Activated CD8-positive, alpha-beta T cell treated with anti-CD3 and anti-CD28 coated beads for 36 hours (primary cell): ENCODE measurements at regions of chr1 and their contacts with region 1.

Region 1: DNA sequence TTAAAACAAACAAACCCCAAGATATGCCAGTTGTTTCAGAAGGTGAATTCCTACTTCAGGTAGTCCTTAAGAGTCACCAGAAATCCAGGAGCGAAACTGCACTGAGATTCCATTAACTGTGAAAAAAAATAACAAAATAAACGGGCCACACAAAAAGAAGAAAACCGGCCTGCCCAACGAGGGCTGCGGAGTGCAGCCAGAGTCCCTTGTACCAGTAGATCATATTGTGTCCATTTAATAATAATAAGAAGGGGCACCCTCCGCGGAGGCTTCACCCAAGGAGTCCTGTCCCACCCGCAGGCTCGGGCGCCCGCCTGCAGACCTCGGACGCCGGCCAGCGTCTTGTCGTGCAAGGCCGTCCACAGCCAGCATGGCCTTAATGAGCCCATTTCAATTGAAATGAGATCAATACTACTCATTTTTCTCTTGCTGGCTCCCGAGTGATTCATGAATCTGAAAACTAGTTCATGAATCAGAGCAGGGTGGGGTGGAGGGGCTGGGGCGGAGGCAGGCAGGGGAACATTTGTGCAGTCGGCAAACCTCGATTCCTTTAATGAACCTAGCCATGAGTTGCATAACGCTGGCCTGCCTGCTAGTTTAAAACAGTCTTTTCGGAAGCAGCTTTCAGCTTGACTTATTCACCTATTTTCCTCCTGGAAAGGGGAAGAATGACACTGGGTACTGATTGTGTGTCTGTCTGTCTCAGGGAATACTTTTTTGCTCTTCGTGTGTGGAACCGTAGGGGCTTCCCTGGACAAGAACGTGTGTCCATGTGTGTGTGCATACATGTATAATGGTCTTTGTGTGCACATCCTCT is 113.1 kb upstream of the IRF2BP2 start:
- DNase-seq: peak; percentile 89
- ATAC-seq: peak; percentile 63
- H3K4me3 Mint-ChIP-seq: peak overlapping the region; percentile 74
- H3K27ac Mint-ChIP-seq: peak overlapping the region; percentile 99
- H3K4me1 Mint-ChIP-seq: peaks cover 70% of the 10 kb centered on the region
- H3K27me3 Mint-ChIP-seq: no peaks in the 10 kb centered on the region
- CTCF ChIP-seq: no peak

Region 2: DNA sequence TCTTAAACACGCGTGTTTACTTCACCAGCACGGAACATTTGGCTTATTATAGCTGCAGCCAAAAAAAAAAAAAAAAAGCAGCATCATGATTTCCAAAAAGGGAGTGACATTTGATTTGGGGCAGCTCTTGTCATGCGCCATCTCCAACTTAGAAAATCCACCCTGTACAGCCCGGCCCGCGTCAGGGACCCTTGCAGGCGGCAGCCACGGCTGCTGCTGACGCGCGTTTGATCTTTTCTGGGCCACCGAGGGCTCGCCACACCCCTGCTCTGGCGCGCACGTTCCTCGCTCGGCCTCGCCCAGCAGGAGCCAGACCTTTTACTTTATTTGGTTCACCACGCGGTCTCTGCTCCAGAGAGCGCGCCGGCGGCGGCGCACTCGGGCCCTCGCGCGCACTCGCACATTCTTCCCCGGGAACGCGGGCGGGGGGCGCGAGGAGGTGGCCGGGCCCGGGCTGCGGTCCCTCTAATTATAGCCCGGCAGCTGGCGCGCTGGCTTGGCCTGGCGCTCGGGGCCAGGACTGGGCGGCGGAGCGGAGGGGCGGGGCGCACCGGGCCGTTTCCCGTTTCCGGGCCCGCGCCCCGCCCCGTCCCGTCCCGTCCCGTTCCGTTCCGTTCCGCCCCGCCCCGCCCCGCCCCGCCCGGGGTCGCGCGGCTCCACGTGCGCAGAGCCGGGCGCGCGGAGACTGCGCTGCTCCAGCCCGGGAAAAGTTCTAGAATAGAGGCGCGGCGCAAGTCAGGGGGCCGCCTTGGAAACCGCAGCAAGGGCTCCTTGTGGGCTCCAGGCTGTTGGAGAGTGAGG is 123.3 kb before region 1 on chr1:
- CTCF ChIA-PET with region 1: interaction called, 5 read pairs
- POLR2A ChIA-PET with region 1: interaction called, 11 read pairs
- intact Hi-C with region 1: no loop called
- DNase-seq: peak; percentile 86
- ATAC-seq: peak; percentile 77
- H3K4me3 Mint-ChIP-seq: peak overlapping the region; percentile 87
- H3K27ac Mint-ChIP-seq: peak overlapping the region; percentile 98
- H3K4me1 Mint-ChIP-seq: peaks cover 53% of the 10 kb centered on the region
- H3K27me3 Mint-ChIP-seq: no peaks in the 10 kb centered on the region
- CTCF ChIP-seq: no peak

Region 3: GRCh38 chr1:234624724-234625117 is 98.4 kb before region 1 on chr1:
- CTCF ChIA-PET with region 1: no interaction called
- POLR2A ChIA-PET with region 1: no interaction called
- intact Hi-C with region 1: no loop called
- DNase-seq: no peak
- ATAC-seq: no peak
- H3K4me3 Mint-ChIP-seq: no peak overlapping the region
- H3K27ac Mint-ChIP-seq: no peak overlapping the region
- H3K4me1 Mint-ChIP-seq: no peaks in the 10 kb centered on the region
- H3K27me3 Mint-ChIP-seq: no peaks in the 10 kb centered on the region
- CTCF ChIP-seq: no peak

Region 4: DNA sequence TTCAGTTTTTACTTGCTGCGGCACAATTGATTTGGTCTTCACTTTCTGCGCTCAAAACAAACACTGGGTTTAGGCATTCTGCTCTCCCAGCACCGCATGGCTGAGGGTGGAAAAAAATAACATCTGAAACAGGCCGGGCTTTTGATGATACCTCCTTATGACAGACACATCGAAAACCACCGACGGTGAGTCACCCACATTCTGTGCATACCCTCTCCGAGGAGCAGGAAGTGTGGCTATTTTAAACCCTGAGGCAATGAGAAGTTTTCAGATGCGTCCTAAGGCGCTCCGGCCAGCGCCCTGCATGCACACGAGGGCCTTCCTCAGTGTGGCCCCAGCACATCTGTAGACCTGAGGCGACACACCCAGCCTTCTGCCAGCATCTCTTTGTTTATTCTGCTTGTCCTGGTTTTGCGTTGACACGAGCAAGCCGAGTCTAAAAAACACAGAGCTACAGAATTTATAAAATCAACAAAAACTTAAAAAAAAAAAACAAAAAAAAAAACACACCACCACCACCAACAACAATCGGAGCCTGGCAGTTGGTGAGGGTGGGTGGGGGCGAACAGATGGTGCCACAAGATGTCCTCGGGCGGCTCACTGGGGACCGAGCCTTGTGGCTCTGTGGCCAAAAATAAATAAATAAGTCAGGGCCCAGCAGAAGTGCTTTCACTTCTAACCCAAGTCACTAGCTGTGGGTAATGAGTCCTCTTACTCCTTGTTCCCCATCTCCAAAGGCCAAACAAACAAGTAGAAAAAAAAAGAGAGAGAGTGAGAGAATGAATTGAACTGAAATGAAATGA is 49.4 kb after region 1 on chr1:
- CTCF ChIA-PET with region 1: interaction called, 7 read pairs
- POLR2A ChIA-PET with region 1: interaction called, 23 read pairs
- intact Hi-C with region 1: no loop called
- DNase-seq: peak; percentile 98
- ATAC-seq: peak; percentile 72
- H3K4me3 Mint-ChIP-seq: peak overlapping the region; percentile 57
- H3K27ac Mint-ChIP-seq: peak overlapping the region; percentile 93
- H3K4me1 Mint-ChIP-seq: peaks cover 60% of the 10 kb centered on the region
- H3K27me3 Mint-ChIP-seq: no peaks in the 10 kb centered on the region
- CTCF ChIP-seq: no peak

Region 5: GRCh38 chr1:235075188-235075926 is 352.2 kb after region 1 on chr1:
- CTCF ChIA-PET with region 1: no interaction called
- POLR2A ChIA-PET with region 1: no interaction called
- intact Hi-C with region 1: loop called (anchors 10 kb)
- DNase-seq: peak; percentile 86
- ATAC-seq: peak; percentile 56
- H3K4me3 Mint-ChIP-seq: peak overlapping the region; percentile 51
- H3K27ac Mint-ChIP-seq: peak overlapping the region; percentile 96
- H3K4me1 Mint-ChIP-seq: peaks cover 31% of the 10 kb centered on the region
- H3K27me3 Mint-ChIP-seq: no peaks in the 10 kb centered on the region
- CTCF ChIP-seq: no peak